ENCODE measurements at regions of chr20 and their contacts with region 1.

Region 1: GRCh38 chr20:2093159-2093781 is 8.4 kb upstream of the STK35 start:
- DNase-seq: peak; percentile 51
- H3K4me3 Mint-ChIP-seq: no peak overlapping the region
- H3K27ac Mint-ChIP-seq: no peak overlapping the region
- H3K4me1 Mint-ChIP-seq: no peaks in the 10 kb centered on the region
- H3K27me3 Mint-ChIP-seq: peaks cover 56% of the 10 kb centered on the region
- CTCF ChIP-seq: peak; percentile 65

Region 2: GRCh38 chr20:1776681-1777475 is 316.4 kb before region 1 on chr20:
- CTCF ChIA-PET with region 1: interaction called, 12 read pairs
- POLR2A ChIA-PET with region 1: no interaction called
- intact Hi-C with region 1: no loop called
- DNase-seq: peak; percentile 87
- H3K4me3 Mint-ChIP-seq: peak overlapping the region; percentile 84
- H3K27ac Mint-ChIP-seq: peak overlapping the region; percentile 89
- H3K4me1 Mint-ChIP-seq: peaks cover 18% of the 10 kb centered on the region
- H3K27me3 Mint-ChIP-seq: peaks cover 14% of the 10 kb centered on the region
- CTCF ChIP-seq: peak; percentile 75

Region 3: DNA sequence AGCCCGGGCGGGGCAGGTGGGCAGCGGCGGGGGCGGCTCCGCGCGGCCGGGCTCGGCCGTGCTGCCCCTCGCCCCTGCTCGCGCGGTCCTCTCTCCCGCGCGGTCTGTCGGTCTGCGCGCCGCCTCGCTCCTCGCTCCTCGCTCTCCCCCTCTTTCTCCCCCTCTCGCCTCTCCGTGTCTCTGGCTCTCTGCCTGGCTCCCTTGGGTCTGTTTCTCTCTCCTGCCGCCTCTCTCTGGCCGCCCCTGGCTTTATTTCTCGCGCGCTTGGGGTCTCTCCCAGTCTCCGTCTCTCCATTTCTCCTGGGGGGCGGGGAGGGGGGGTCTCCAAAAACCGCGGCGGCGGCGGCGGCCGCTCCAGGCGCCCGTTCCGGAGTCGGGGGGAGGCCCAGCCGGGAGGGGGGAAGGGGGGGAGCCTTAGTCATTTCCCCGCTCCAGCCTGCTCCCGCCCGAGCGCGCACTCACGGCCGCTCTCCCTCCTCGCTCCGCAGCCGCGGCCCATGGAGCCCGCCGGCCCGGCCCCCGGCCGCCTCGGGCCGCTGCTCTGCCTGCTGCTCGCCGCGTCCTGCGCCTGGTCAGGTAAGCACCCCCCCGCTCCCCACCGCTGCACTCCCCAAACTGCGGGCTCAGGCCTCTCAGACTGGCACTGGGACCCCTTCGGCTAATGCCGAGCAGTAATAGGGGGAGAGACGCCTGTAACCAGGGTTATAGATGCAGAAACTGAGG is 198.2 kb before region 1 on chr20 and contains the start of gene SIRPA:
- CTCF ChIA-PET with region 1: interaction called, 3 read pairs
- POLR2A ChIA-PET with region 1: no interaction called
- intact Hi-C with region 1: loop called (anchors 5 kb)
- DNase-seq: peak; percentile 64
- H3K4me3 Mint-ChIP-seq: peak within 1 kb of the TSS; percentile 79
- H3K27ac Mint-ChIP-seq: peak within 1 kb of the TSS; percentile 66
- H3K4me1 Mint-ChIP-seq: peaks cover 37% of the 10 kb centered on the region
- H3K27me3 Mint-ChIP-seq: no peaks in the 10 kb centered on the region
- CTCF ChIP-seq: no peak
- total RNA-seq, gene SIRPA: 18.0 and 23.6 TPM in 2 replicates

Region 4: DNA sequence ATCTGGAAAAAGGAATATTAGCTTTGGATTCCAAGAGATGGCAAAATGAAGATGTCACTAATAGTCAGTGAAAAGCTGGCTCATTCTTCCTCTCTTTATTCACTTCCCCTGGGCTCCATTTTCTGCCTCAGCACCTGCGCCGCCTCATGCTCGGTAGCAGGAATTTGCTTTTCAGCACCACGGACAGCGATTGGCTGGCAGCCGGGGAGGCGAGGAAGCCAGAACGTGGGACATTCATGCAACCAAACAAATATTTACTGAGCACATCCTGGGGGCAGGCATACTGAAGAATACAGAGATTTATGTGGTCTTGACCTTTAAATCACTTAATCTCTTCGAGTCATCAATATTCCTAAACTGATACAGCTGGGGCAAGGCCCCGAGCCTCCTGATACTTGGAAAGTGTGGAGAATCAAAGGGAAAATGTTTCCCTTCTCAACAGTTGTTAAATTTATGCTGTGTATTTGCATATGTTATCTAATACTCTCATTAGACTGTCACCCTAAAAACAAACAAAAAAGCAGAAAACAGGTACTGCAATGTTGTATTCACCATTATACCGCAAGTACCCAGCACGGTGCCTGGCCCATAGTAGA is 87.3 kb before region 1 on chr20:
- CTCF ChIA-PET with region 1: interaction called, 36 read pairs
- POLR2A ChIA-PET with region 1: no interaction called
- intact Hi-C with region 1: loop called (anchors 1 kb)
- DNase-seq: peak; percentile 63
- H3K4me3 Mint-ChIP-seq: no peak overlapping the region
- H3K27ac Mint-ChIP-seq: no peak overlapping the region
- H3K4me1 Mint-ChIP-seq: no peaks in the 10 kb centered on the region
- H3K27me3 Mint-ChIP-seq: peaks cover 46% of the 10 kb centered on the region
- CTCF ChIP-seq: no peak

Measured in MCF 10A (cell line).